HepG2 (cell line): ENCODE measurements at regions of chr15 and their contacts with region 1.

Region 1: DNA sequence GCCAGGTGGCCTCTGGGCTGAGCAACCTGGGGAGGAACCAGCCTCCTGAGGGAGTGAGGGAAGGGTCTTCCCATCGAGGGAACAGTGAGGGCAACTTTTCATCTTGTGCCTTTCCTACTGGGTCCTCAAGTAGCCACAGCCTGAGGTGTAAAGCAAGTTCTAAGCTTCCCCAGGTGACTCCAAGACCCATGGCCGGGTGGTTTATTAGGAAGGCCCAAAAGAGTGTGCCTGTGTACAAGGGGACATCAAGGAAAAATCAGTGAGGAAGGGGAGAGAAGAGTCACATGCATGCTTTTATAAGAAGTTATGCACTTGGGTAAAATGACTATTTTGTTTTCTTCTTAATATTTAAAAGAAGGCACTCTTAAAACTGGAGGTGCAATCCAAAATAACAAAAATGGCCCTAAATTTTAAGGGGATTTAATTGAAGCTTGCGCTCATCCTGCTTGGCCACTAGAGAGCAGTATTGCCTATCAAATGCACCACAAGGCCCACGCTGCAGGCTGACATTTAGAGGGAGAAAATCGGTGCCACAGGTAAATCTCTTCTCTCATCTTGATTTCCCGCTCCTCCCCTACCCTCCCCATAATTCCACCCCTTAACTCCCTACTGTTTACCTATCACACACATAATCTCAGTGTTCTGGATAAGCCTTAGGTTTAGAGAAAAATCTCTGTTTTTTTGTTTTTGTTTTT is 6.7 kb downstream of the NANOGP8 start:
- DNase-seq: peak; percentile 44
- ATAC-seq: peak; percentile 84
- H3K4me3 ChIP-seq: no peak overlapping the region
- H3K27ac ChIP-seq: no peak overlapping the region
- H3K4me1 ChIP-seq: 0 out of 2 replicates have a peak, but pooled peaks cover 4% of the 10 kb centered on the region
- H3K27me3 ChIP-seq: no peaks in the 10 kb centered on the region; a peak in 1 of 5 replicates
- CTCF ChIP-seq: peak; percentile 86
- EP300 ChIP-seq: no peak
- POLR2A ChIP-seq: no peak
- RAD21 ChIP-seq: peak; percentile 81

Region 2: DNA sequence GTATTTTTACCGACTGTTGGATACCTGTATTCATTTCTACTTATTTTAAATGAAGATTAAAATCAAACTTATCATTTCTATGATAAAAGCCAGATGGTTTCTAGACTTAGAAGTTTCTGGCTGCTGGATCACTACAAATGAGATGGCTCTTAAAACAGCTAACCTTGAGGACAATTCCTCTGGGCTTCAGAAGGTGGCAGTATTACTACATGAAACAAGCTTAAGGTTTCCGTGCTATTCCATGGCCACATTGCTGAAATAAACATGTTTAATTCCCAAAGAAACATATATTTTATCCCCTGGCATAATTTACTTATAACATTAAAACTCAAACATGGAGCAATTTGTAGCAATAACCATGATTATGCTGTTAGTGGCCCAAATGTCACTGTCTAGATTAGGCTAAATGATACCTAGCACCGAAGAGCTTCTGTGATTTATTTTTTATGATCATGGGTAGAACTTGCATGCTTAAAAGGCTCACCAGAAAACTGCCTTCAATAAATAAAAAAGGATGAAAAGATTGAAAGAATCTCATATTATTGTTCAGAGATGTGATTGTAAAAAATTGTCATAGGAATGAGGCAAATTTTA is 210.8 kb after region 1 on chr15:
- CTCF ChIA-PET with region 1: no interaction called
- POLR2A ChIA-PET with region 1: no interaction called
- in situ Hi-C with region 1: loop called (anchors 10 kb)
- intact Hi-C with region 1: loop called (anchors 1 kb)
- DNase-seq: peak; percentile 44
- ATAC-seq: peak; percentile 66
- H3K4me3 ChIP-seq: no peak overlapping the region
- H3K27ac ChIP-seq: no peak overlapping the region
- H3K4me1 ChIP-seq: peaks cover 12% of the 10 kb centered on the region
- H3K27me3 ChIP-seq: no peaks in the 10 kb centered on the region
- CTCF ChIP-seq: peak; percentile 75
- EP300 ChIP-seq: no peak
- POLR2A ChIP-seq: no peak
- RAD21 ChIP-seq: peak; percentile 46; the same call in 1 of the 2 replicates

Region 3: DNA sequence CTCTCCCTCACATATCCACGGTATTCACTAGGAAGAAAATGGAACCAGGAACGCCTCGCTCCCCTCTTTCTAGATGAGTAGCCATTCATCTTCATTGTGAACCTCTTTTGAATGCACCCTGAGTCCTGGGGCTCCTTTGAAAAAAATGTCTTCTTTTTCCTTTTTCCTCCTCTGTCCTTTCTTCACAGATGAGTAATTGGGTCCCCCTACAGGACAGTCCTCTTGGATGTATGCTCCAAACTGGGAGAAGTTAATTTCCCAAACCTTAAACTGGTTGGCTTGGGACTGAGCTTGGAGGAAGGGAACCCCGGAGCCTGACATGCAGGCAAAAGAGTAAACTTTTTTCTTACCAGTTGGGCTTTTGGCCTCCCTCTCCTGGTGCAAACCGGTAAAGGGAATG is 358.8 kb after region 1 on chr15:
- CTCF ChIA-PET with region 1: no interaction called
- POLR2A ChIA-PET with region 1: no interaction called
- in situ Hi-C with region 1: no loop called
- intact Hi-C with region 1: loop called (anchors 2 kb)
- DNase-seq: no peak
- ATAC-seq: no peak
- H3K4me3 ChIP-seq: no peak overlapping the region
- H3K27ac ChIP-seq: no peak overlapping the region
- H3K4me1 ChIP-seq: no peaks in the 10 kb centered on the region
- H3K27me3 ChIP-seq: no peaks in the 10 kb centered on the region
- CTCF ChIP-seq: no peak
- EP300 ChIP-seq: no peak
- POLR2A ChIP-seq: no peak
- RAD21 ChIP-seq: no peak

Region 4: DNA sequence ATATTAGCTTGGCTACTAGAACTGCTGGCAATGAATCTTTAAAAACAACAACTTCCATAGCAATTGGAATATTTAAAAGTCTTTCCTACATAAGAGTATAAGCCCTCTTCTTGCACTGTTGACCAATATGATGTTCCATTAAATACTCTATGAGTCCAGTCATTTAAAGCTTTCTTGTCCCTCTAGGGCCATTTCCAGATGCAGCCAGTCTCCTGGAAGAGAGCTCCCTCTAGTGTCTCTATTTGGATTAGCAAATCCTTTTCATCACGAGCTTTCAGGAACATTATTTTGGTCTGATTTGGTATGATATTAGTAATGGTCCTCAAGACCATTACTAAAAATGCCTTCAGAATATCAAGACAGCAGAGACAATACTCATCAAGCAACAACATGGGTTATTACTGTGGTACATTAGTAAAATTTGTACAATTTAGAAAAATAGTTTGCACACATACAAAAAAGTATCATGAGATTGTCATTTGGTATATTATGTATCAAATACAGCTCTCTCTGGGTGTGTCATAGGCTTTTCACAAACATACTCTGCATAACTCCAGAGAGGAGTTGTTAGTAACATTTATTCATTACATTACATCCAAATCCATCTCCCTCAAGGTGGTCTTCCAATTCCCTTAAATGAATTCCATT is 366.3 kb after region 1 on chr15:
- CTCF ChIA-PET with region 1: interaction called, 28 read pairs
- POLR2A ChIA-PET with region 1: no interaction called
- in situ Hi-C with region 1: loop called (anchors 5 kb)
- intact Hi-C with region 1: loop called (anchors 1 kb)
- DNase-seq: peak; percentile 37
- ATAC-seq: peak; percentile 34; the same call in 1 of the 3 replicates
- H3K4me3 ChIP-seq: no peak overlapping the region
- H3K27ac ChIP-seq: no peak overlapping the region
- H3K4me1 ChIP-seq: no peaks in the 10 kb centered on the region
- H3K27me3 ChIP-seq: no peaks in the 10 kb centered on the region
- CTCF ChIP-seq: peak; percentile 77
- EP300 ChIP-seq: no peak
- POLR2A ChIP-seq: no peak
- RAD21 ChIP-seq: peak; percentile 39; the same call in 1 of the 2 replicates